B cell (primary cell): ENCODE measurements at regions of chr10 and their contacts with region 1.

Region 1: GRCh38 chr10:87861953-87862678 is 1.2 kb downstream of the KLLN start:
- DNase-seq: peak; percentile 98
- ATAC-seq: peak; percentile 66
- H3K4me3 ChIP-seq: peak overlapping the region; percentile 87 to 99 (median 99)
- H3K4me3 Mint-ChIP-seq: peak overlapping the region; percentile 98
- H3K27ac ChIP-seq: peak overlapping the region; percentile 79 to 84
- H3K27ac Mint-ChIP-seq: peak overlapping the region; percentile 98
- H3K4me1 ChIP-seq: peaks cover 16 to 20% of the 10 kb centered on the region in 2 donors
- H3K4me1 Mint-ChIP-seq: peaks cover 35% of the 10 kb centered on the region
- H3K27me3 ChIP-seq: no peaks in the 10 kb centered on the region
- H3K27me3 Mint-ChIP-seq: no peaks in the 10 kb centered on the region
- CTCF ChIP-seq: no peak

Region 2: GRCh38 chr10:87850742-87851205 is 11.3 kb before region 1 on chr10:
- CTCF ChIA-PET with region 1: interaction called, 16 read pairs
- POLR2A ChIA-PET with region 1: no interaction called
- intact Hi-C with region 1: no loop called
- DNase-seq: peak; percentile 66
- ATAC-seq: peak; percentile 80
- H3K4me3 ChIP-seq: no peak overlapping the region
- H3K4me3 Mint-ChIP-seq: no peak overlapping the region
- H3K27ac ChIP-seq: no peak overlapping the region
- H3K27ac Mint-ChIP-seq: no peak overlapping the region
- H3K4me1 ChIP-seq: peaks cover 0 to 4% of the 10 kb centered on the region in 2 donors
- H3K4me1 Mint-ChIP-seq: peaks cover 5% of the 10 kb centered on the region
- H3K27me3 ChIP-seq: no peaks in the 10 kb centered on the region
- H3K27me3 Mint-ChIP-seq: no peaks in the 10 kb centered on the region
- CTCF ChIP-seq: peak; percentile 54

Region 3: DNA sequence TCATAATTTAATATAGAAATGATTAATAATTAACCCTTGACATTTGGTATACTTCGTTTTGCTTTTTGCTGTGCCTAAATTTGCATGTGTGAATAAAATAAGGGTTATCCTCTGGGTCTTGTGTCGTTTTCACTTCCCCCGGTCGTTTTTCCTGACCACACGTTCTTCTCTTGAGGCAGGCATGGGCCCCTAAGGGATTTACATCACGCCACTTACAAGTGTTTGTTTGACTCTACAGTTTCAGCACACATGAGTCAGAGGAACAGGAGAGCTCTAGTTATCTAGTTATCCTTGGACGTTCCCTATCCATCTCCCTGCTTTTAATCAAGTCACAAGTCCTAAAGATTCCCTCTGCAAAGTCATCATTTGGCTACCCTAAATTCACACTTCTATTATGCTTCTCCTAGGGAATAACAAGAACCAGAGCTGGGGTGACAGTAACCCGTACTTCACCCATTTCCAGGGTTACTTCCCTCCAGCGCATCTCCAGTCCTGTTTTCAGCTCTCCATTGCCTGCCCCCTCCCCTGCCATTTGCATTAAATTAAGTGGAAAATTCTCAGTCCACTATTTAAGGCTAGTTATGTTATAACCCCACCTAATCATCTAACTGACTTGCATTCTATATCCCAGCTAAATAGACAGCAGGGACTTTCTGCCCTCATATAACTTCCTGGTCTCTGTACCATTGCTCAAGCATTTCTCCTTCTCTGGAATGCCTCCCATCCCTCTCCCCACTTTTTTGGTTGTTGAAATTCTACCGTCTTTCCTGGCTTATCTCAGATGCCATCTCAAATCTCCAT is 208.2 kb after region 1 on chr10:
- CTCF ChIA-PET with region 1: no interaction called
- POLR2A ChIA-PET with region 1: interaction called, 4 read pairs
- intact Hi-C with region 1: loop called (anchors 1 kb)
- DNase-seq: peak; percentile 50
- ATAC-seq: peak; percentile 67
- H3K4me3 ChIP-seq: no peak overlapping the region
- H3K4me3 Mint-ChIP-seq: peak overlapping the region; percentile 67
- H3K27ac ChIP-seq: no peak overlapping the region
- H3K27ac Mint-ChIP-seq: peak overlapping the region; percentile 27
- H3K4me1 ChIP-seq: peaks cover 72% of the 10 kb centered on the region in 2 donors
- H3K4me1 Mint-ChIP-seq: peaks cover 69% of the 10 kb centered on the region
- H3K27me3 ChIP-seq: no peaks in the 10 kb centered on the region
- H3K27me3 Mint-ChIP-seq: no peaks in the 10 kb centered on the region
- CTCF ChIP-seq: no peak

Region 4: GRCh38 chr10:88270871-88271713 is 409.0 kb after region 1 on chr10:
- CTCF ChIA-PET with region 1: no interaction called
- POLR2A ChIA-PET with region 1: no interaction called
- intact Hi-C with region 1: loop called (anchors 5 kb)
- DNase-seq: peak; percentile 31
- ATAC-seq: peak; percentile 73
- H3K4me3 ChIP-seq: no peak overlapping the region
- H3K4me3 Mint-ChIP-seq: peak overlapping the region; percentile 58
- H3K27ac ChIP-seq: peak overlapping the region in 1 of 2 donors; percentile 52
- H3K27ac Mint-ChIP-seq: peak overlapping the region; percentile 75
- H3K4me1 ChIP-seq: peaks cover 24 to 31% of the 10 kb centered on the region in 2 donors
- H3K4me1 Mint-ChIP-seq: peaks cover 31% of the 10 kb centered on the region
- H3K27me3 ChIP-seq: no peaks in the 10 kb centered on the region
- H3K27me3 Mint-ChIP-seq: no peaks in the 10 kb centered on the region
- CTCF ChIP-seq: no peak

Region 5: GRCh38 chr10:88553116-88553752 is 691.1 kb after region 1 on chr10:
- CTCF ChIA-PET with region 1: interaction called, 122 read pairs
- POLR2A ChIA-PET with region 1: no interaction called
- intact Hi-C with region 1: loop called (anchors 1 kb)
- DNase-seq: peak; percentile 74
- ATAC-seq: peak; percentile 86
- H3K4me3 ChIP-seq: no peak overlapping the region
- H3K4me3 Mint-ChIP-seq: no peak overlapping the region
- H3K27ac ChIP-seq: no peak overlapping the region
- H3K27ac Mint-ChIP-seq: no peak overlapping the region
- H3K4me1 ChIP-seq: no peaks in the 10 kb centered on the region
- H3K4me1 Mint-ChIP-seq: no peaks in the 10 kb centered on the region
- H3K27me3 ChIP-seq: no peaks in the 10 kb centered on the region
- H3K27me3 Mint-ChIP-seq: no peaks in the 10 kb centered on the region
- CTCF ChIP-seq: peak; percentile 83

Region 6: DNA sequence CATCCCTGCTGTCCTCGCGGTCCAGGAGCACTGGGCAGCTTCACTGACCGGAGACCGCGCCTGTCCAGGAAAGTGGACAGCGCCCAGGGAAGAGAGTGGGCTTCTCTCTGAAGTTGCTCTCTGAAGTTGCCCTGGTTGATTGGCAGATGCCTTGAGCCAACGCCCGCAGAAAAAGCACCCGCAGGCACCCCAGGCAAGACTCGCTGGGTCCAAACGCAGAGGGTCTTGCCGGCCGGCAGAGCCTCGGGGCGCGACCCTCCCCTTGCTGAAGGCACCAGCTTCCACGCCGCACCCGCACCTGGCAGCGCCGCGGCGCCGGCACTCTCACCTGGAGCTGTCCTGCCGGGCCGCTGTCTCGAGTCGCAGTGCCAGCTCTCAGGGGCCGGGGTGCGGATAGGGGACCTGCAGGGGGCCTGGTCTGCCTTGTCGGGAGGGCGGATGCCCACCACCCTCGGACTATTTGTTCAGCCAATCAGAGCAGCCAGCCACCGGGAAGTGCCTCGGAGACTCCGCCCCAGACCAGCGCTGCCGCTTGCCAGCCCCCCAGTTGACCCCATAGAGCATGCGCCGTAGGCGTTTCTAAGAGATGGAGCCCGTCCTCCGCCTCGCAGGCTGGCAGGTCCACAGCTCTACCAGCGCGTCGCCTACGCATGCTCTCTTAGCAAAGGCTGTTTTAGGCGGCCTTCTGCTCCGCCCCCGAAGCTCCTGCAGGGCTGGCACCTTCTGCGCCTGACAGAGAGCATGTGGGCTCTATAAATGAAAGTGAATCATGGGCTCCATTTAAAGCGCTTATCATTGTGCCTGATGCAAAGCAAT is 1389.5 kb after region 1 on chr10 and contains the start of gene LIPA:
- CTCF ChIA-PET with region 1: no interaction called
- POLR2A ChIA-PET with region 1: no interaction called
- intact Hi-C with region 1: loop called (anchors 5 kb)
- DNase-seq: peak; percentile 99
- ATAC-seq: peak; percentile 95
- H3K4me3 ChIP-seq: peak within 1 kb of the TSS; percentile 65 to 92 (median 84)
- H3K4me3 Mint-ChIP-seq: peak within 1 kb of the TSS; percentile 94
- H3K27ac ChIP-seq: peak within 1 kb of the TSS; percentile 48 to 71
- H3K27ac Mint-ChIP-seq: peak within 1 kb of the TSS; percentile 85
- H3K4me1 ChIP-seq: peaks cover 18% of the 10 kb centered on the region in 2 donors
- H3K4me1 Mint-ChIP-seq: peaks cover 24% of the 10 kb centered on the region
- H3K27me3 ChIP-seq: no peaks in the 10 kb centered on the region
- H3K27me3 Mint-ChIP-seq: no peaks in the 10 kb centered on the region
- CTCF ChIP-seq: no peak
- total RNA-seq, gene LIPA: 36.5 and 38.9 TPM in 2 replicates